Dorsolateral prefrontal cortex (tissue), 120 donors: ENCODE measurements at regions of chr15 and their contacts with region 1.

Region 1: GRCh38 chr15:84748274-84749110 is at the start of gene ZNF592:
- DNase-seq: peak; percentile 42 to 86 (median 68)
- H3K4me3 ChIP-seq: peak within 1 kb of the TSS; percentile 76 to 98 (median 91)
- H3K27ac ChIP-seq: peak within 1 kb of the TSS; percentile 96 to 100 (median 99)
- H3K27me3 ChIP-seq: no peaks in the 10 kb centered on the region
- CTCF ChIP-seq: peak in 7 of 56 donors; percentile 5 to 44 (median 23)
- total RNA-seq, gene ZNF592: 24.1 to 48.5 (median 30.4) TPM

Region 2: DNA sequence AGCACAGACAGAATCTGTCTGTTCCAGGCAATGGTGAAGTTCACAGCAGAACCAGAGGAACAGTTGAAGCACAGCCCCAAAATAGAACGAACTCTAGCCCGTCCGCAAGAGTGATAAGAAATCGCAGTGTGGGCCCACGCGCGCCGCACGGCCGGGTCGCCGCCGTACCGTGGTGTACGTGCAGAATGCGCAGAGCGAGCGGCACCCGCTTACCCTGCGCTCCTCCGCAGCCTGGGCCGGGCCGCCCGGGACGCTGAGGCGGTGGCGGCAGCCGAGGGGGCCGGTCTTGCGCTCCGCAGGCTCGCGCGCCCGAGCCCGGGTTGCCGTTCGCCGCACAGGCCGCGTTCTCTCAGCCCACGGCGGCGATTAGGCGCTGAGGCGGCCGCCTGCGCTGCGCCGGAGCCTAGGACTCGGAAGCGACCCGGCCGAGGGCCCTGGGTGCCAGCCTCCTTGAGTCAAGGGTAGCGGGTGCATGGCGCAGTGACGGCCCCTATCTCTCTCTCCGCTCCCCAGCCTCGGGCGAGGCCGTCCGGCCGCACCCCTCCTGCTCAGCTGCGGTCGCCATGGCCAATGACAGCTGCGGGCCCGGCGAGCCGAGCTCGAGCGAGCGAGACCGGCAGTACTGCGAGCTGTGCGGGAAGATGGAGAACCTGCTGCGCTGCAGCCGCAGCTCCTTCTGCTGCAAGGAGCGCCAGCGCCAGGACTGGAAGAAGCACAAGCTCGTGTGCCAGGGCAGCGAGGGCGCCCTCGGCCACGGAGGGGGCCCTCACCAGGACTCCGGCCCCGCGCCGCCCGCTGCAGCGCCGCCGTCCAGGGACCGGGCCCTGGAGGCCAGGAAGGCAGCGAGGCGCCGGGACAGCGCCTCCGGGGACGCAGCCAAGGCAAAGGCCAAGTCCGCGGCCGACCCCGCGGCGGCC is 114.9 kb before region 1 on chr15:
- intact Hi-C with region 1: loop called (anchors 1 to 5 kb)
- DNase-seq: peak in 9 of 10 donors; percentile 39 to 75 (median 62)
- H3K4me3 ChIP-seq: peak overlapping the region; percentile 36 to 90 (median 78)
- H3K27ac ChIP-seq: peak overlapping the region; percentile 86 to 100 (median 97)
- H3K27me3 ChIP-seq: no peaks in the 10 kb centered on the region
- CTCF ChIP-seq: peak in 23 of 56 donors; percentile 3 to 54 (median 14)

Region 3: GRCh38 chr15:84716036-84716799 is 32.3 kb before region 1 on chr15 and contains the start of gene SEC11A:
- intact Hi-C with region 1: loop called (anchors 1 kb)
- DNase-seq: peak; percentile 93 to 97 (median 96)
- H3K4me3 ChIP-seq: peak within 1 kb of the TSS; percentile 61 to 99 (median 91)
- H3K27ac ChIP-seq: peak within 1 kb of the TSS; percentile 66 to 98 (median 95)
- H3K27me3 ChIP-seq: no peaks in the 10 kb centered on the region
- CTCF ChIP-seq: peak in 32 of 56 donors; percentile 7 to 53 (median 30)
- total RNA-seq, gene SEC11A: 22.6 to 55.4 (median 35.9) TPM